Activated B cell treated with CpG ODN at 0.5 μM for 24 hours (primary cell): ENCODE measurements at regions of chr17 and their contacts with region 1.

Region 1: GRCh38 chr17:46733837-46734475 is 84.5 kb downstream of the WNT3 start:
- DNase-seq: no peak
- ATAC-seq: no peak
- H3K4me3 Mint-ChIP-seq: no peak overlapping the region
- H3K27ac Mint-ChIP-seq: no peak overlapping the region
- H3K4me1 Mint-ChIP-seq: peaks cover 48% of the 10 kb centered on the region
- H3K27me3 Mint-ChIP-seq: no peaks in the 10 kb centered on the region
- CTCF ChIP-seq: no peak

Region 2: GRCh38 chr17:46719891-46720290 is 14.1 kb before region 1 on chr17:
- CTCF ChIA-PET with region 1: no interaction called
- POLR2A ChIA-PET with region 1: no interaction called
- intact Hi-C with region 1: loop called (anchors 2 kb)
- DNase-seq: no peak
- ATAC-seq: no peak
- H3K4me3 Mint-ChIP-seq: no peak overlapping the region
- H3K27ac Mint-ChIP-seq: no peak overlapping the region
- H3K4me1 Mint-ChIP-seq: peaks cover 29% of the 10 kb centered on the region
- H3K27me3 Mint-ChIP-seq: no peaks in the 10 kb centered on the region
- CTCF ChIP-seq: no peak

Region 3: DNA sequence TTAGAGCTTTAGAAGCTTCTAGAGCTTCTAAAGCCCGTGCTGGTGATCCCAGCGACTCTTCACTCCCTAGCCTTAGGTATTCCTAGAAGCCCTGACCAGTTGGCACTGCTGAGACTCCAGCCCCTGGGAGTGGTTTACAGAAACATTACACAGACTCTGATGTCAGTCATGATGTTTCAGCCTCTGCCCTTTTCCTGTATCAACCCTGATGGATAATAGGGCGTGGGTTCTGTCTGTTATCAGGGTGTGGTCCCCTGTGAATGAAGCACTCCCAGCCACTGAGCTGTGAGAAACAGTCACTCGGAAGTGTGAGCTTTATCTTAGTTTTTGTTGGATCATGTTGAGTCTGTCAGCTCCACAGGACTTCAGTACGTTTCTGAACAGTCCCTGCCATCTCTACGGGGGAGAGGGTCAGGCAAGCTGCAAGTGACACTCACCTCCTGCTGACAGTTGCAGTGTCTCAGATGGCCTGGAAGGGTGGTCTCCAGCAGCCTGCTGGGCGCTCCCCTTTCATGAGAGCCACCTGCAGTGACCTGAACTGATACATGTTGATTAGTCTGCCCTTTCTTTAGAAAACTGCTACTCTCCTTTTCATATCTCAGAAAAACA is 201.8 kb after region 1 on chr17:
- CTCF ChIA-PET with region 1: no interaction called
- POLR2A ChIA-PET with region 1: no interaction called
- intact Hi-C with region 1: no loop called
- DNase-seq: no peak
- ATAC-seq: no peak
- H3K4me3 Mint-ChIP-seq: no peak overlapping the region
- H3K27ac Mint-ChIP-seq: no peak overlapping the region
- H3K4me1 Mint-ChIP-seq: no peaks in the 10 kb centered on the region
- H3K27me3 Mint-ChIP-seq: no peaks in the 10 kb centered on the region
- CTCF ChIP-seq: no peak